CD8-positive, alpha-beta T cell (primary cell): ENCODE measurements at regions of chr2 and their contacts with region 1.

Region 1: GRCh38 chr2:53939656-53940055 is 31.1 kb downstream of the PSME4 start:
- DNase-seq: no peak
- ATAC-seq: no peak
- H3K4me3 ChIP-seq: no peak overlapping the region
- H3K4me3 Mint-ChIP-seq: no peak overlapping the region
- H3K27ac ChIP-seq: no peak overlapping the region
- H3K27ac Mint-ChIP-seq: no peak overlapping the region
- H3K4me1 ChIP-seq: no peaks in the 10 kb centered on the region
- H3K4me1 Mint-ChIP-seq: peaks cover 16% of the 10 kb centered on the region
- H3K27me3 ChIP-seq: no peaks in the 10 kb centered on the region
- H3K27me3 Mint-ChIP-seq: no peaks in the 10 kb centered on the region
- CTCF ChIP-seq: no peak

Region 2: DNA sequence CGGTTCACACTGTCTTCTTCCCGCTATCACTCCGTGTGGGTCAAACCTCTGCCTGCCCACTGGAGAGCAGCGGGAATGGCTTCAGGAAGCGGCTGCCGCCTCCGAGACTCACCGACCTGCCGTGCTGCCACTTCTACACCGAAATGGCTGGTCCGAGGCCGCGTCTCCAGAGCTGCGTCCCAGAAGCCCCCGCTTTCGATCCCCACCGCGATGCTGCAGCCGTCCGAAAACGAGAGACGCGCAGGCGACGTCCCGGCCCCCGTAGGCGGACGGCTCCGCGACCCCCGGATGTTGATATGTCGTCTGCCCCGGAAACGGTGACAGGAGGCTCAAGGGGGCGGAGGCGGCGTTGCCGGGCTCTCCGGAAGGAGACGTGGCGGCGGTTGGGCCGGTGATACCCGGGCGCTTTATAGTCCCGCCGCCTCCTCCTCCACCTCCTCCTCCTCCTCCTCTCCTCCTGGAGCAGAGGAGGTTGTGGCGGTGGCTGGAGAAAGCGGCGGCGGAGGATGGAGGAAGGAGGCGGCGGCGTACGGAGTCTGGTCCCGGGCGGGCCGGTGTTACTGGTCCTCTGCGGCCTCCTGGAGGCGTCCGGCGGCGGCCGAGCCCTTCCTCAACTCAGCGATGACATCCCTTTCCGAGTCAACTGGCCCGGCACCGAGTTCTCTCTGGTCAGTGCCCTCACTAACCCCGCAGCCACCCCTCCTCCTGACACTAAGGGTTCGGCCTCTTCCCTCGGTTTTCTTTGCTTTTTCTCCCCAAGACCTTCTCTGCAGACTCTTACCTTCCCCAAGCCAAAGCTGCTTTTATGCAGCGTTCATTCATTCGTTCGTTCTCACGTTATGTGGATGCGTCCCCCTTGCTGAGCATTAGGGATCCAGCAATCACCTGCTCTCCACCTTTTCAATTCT is 152.7 kb before region 1 on chr2 and contains the starts of genes ASB3 and ERLEC1:
- CTCF ChIA-PET with region 1: no interaction called
- POLR2A ChIA-PET with region 1: no interaction called
- intact Hi-C with region 1: no loop called
- DNase-seq: peak; percentile 78 to 95 (median 90)
- ATAC-seq: peak; percentile 88
- H3K4me3 ChIP-seq: peak within 1 kb of the TSS; percentile 94 to 96
- H3K4me3 Mint-ChIP-seq: peak within 1 kb of the TSS; percentile 95
- H3K27ac ChIP-seq: peak within 1 kb of the TSS; percentile 88 to 89
- H3K27ac Mint-ChIP-seq: peak within 1 kb of the TSS; percentile 95
- H3K4me1 ChIP-seq: peaks cover 30% of the 10 kb centered on the region
- H3K4me1 Mint-ChIP-seq: peaks cover 63% of the 10 kb centered on the region
- H3K27me3 ChIP-seq: no peaks in the 10 kb centered on the region
- H3K27me3 Mint-ChIP-seq: no peaks in the 10 kb centered on the region
- CTCF ChIP-seq: no peak
- total RNA-seq, gene ASB3: 25.0 to 26.2 TPM
- total RNA-seq, gene ERLEC1: 24.1 to 27.1 TPM

Region 3: DNA sequence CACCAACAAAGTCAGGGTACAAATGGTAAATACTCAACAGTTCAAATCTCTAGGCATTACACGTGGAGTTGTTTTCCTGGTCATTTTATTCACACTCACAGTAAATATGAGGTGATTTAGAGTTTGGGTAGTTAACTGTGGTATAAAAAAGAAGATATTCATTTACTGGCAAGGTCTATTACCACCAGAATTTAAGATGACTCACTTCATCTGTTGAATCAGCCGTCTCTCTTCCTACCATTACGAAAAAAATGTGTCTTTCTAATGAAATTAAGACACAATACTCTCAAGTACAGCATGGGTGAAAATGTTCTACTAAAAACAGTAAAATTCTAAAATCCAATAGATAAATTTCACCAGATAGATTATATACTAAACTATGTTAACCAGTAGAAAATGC is 58.9 kb before region 1 on chr2:
- CTCF ChIA-PET with region 1: no interaction called
- POLR2A ChIA-PET with region 1: no interaction called
- intact Hi-C with region 1: loop called in 1 of 2 experiments (anchors 10 kb)
- DNase-seq: no peak
- ATAC-seq: no peak
- H3K4me3 ChIP-seq: no peak overlapping the region
- H3K4me3 Mint-ChIP-seq: no peak overlapping the region
- H3K27ac ChIP-seq: no peak overlapping the region
- H3K27ac Mint-ChIP-seq: no peak overlapping the region
- H3K4me1 ChIP-seq: no peaks in the 10 kb centered on the region
- H3K4me1 Mint-ChIP-seq: no peaks in the 10 kb centered on the region
- H3K27me3 ChIP-seq: no peaks in the 10 kb centered on the region
- H3K27me3 Mint-ChIP-seq: no peaks in the 10 kb centered on the region
- CTCF ChIP-seq: no peak

Region 4: GRCh38 chr2:54048117-54048785 is 108.6 kb after region 1 on chr2:
- CTCF ChIA-PET with region 1: interaction called, 3 read pairs
- POLR2A ChIA-PET with region 1: no interaction called
- intact Hi-C with region 1: loop called in 1 of 2 experiments (anchors 10 kb)
- DNase-seq: peak in 4 of 9 experiments; percentile 6 to 53 (median 32)
- ATAC-seq: peak; percentile 79
- H3K4me3 ChIP-seq: no peak overlapping the region
- H3K4me3 Mint-ChIP-seq: no peak overlapping the region
- H3K27ac ChIP-seq: no peak overlapping the region
- H3K27ac Mint-ChIP-seq: no peak overlapping the region
- H3K4me1 ChIP-seq: peaks cover 12% of the 10 kb centered on the region
- H3K4me1 Mint-ChIP-seq: peaks cover 12% of the 10 kb centered on the region
- H3K27me3 ChIP-seq: no peaks in the 10 kb centered on the region
- H3K27me3 Mint-ChIP-seq: no peaks in the 10 kb centered on the region
- CTCF ChIP-seq: no peak